RWPE1 (cell line): ENCODE measurements at regions of chr1 and their contacts with region 1.

Region 1: GRCh38 chr1:8913111-8913856 is 32.4 kb upstream of the CA6 start:
- DNase-seq: no peak
- H3K27ac ChIP-seq: no peak overlapping the region
- CTCF ChIP-seq: no peak

Region 2: DNA sequence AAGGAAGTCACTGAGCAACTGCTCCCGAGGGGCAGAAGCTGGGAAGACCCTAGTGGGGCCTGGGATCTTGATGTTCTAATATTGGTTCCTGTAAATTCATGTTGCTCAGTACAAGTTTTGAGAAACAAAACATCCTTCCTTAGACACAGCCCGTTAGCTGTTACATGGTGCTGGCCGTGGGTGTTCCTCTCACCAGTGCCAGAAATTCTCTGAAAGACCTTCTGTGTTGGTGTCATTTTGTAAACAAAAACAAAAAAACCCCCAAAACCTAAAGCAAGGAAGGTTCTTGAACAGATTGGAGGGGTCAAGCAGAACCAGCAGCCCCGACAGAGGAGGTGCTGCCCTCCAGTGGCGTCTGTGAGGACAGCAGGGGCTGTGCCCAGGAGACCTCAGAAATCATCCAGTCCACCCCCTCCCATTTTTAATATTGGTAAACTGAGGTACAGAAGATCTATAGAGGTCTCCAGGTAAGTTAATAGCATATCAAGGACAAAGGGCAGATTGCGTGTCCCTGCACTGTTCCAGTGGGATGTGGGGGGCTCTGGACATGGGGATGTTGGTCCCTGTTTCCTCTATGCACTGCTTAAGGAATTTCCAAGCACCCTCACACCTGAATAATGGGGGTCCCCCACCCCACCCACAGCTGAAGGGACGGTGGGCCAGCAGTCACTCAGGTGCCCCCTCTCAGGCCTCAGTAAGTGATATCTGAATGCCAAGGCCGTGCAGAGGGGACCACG is 74.8 kb after region 1 on chr1:
- CTCF ChIA-PET with region 1: interaction called, 19 read pairs
- POLR2A ChIA-PET with region 1: no interaction called
- DNase-seq: peak; percentile 61
- H3K27ac ChIP-seq: peak overlapping the region; percentile 81
- CTCF ChIP-seq: peak; percentile 94

Region 3: DNA sequence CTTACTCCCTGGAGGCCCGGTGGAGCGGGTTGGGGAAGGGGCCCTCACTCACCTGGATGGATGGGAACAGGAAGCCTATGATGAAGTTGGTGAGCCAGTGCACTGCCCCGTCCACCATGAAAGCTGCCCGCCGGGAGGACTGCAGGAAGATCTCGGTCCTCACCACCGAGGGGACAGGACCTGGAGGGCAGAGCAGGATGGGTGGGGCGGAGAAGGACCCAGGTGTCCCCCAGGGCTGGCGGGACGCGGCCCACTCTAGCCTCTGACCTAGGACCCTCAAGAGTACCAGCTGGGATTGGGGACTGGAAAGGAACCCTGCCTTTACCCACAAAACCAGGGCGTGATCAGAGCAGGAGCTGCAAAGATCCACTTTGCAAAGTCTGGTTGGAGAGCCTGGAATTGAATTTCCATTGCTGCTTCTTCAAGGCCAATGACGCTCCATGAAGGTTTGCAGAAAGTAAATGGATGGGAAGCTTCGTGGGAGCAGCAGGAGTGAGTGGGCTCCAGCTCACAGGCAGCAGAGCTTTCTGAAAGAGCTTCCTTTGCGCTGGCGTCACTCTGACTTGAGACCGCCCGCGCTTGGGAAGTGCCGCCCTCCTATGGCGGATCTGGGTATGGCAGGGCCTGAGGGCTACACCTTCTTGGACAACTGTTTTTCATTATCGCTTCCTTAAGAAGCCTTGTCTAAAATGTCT is 91.6 kb after region 1 on chr1:
- CTCF ChIA-PET with region 1: interaction called, 12 read pairs
- POLR2A ChIA-PET with region 1: no interaction called
- DNase-seq: peak; percentile 64
- H3K27ac ChIP-seq: no peak overlapping the region
- CTCF ChIP-seq: peak; percentile 79

Region 4: GRCh38 chr1:9101510-9102146 is 188.3 kb after region 1 on chr1:
- CTCF ChIA-PET with region 1: interaction called, 14 read pairs
- POLR2A ChIA-PET with region 1: no interaction called
- DNase-seq: peak; percentile 62
- H3K27ac ChIP-seq: peak overlapping the region; percentile 11
- CTCF ChIP-seq: peak; percentile 66